ENCODE measurements at regions of chr2 and their contacts with region 1.

Region 1: DNA sequence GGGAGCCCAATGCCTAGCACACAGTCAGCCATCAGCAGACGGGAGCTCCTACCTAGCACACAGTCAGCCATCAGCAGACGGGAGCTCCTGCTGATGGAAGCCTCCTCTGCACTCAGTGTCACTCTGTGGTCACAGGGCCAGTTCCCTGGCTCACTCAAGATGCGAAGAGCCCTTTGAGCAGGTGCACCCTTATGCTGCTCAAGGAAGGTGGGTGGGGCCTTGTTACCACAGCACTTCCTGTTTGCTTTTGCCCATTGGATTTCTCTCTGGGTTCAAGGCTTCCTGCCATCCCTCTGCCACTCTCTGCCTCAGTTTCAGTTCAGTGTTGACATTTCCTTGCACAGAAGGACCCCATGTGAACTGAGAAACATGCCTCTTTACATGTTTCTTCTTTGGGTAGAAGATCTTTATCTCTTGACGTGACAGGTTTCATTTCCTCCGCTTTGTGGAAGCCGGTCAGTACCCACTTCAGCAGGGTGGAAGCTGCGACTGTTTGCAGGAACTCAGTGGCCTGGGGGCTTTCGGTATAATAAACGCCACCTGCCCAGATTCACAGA is 11.6 kb downstream of the TRIB2 start:
- DNase-seq: peak; percentile 81
- H3K4me3 Mint-ChIP-seq: peak overlapping the region; percentile 28
- H3K27ac Mint-ChIP-seq: peak overlapping the region; percentile 73
- H3K4me1 Mint-ChIP-seq: peaks cover 66% of the 10 kb centered on the region
- H3K27me3 Mint-ChIP-seq: no peaks in the 10 kb centered on the region

Region 2: GRCh38 chr2:12931186-12931844 is 203.0 kb after region 1 on chr2:
- CTCF ChIA-PET with region 1: interaction called, 29 read pairs
- POLR2A ChIA-PET with region 1: interaction called, 3 read pairs
- DNase-seq: no peak
- H3K4me3 Mint-ChIP-seq: no peak overlapping the region
- H3K27ac Mint-ChIP-seq: no peak overlapping the region
- H3K4me1 Mint-ChIP-seq: peaks cover 11% of the 10 kb centered on the region
- H3K27me3 Mint-ChIP-seq: peaks cover 21% of the 10 kb centered on the region

Measured in activated CD4-positive, alpha-beta memory T cell treated with anti-CD3 and anti-CD28 coated beads, Interleukin-2, amount 10 ng/mL, durations not matched to agents 7 days and 5 days (primary cell).